ENCODE measurements at regions of chr12 and their contacts with region 1.

Region 1: GRCh38 chr12:88985475-88986030 is 366.7 kb downstream of the DUSP6 start:
- DNase-seq: no peak

Region 2: GRCh38 chr12:88960213-88960878 is 25.2 kb before region 1 on chr12:
- intact Hi-C with region 1: loop called (anchors 2 kb)
- DNase-seq: no peak